ENCODE measurements at regions of chr16 and their contacts with region 1.

Region 1: DNA sequence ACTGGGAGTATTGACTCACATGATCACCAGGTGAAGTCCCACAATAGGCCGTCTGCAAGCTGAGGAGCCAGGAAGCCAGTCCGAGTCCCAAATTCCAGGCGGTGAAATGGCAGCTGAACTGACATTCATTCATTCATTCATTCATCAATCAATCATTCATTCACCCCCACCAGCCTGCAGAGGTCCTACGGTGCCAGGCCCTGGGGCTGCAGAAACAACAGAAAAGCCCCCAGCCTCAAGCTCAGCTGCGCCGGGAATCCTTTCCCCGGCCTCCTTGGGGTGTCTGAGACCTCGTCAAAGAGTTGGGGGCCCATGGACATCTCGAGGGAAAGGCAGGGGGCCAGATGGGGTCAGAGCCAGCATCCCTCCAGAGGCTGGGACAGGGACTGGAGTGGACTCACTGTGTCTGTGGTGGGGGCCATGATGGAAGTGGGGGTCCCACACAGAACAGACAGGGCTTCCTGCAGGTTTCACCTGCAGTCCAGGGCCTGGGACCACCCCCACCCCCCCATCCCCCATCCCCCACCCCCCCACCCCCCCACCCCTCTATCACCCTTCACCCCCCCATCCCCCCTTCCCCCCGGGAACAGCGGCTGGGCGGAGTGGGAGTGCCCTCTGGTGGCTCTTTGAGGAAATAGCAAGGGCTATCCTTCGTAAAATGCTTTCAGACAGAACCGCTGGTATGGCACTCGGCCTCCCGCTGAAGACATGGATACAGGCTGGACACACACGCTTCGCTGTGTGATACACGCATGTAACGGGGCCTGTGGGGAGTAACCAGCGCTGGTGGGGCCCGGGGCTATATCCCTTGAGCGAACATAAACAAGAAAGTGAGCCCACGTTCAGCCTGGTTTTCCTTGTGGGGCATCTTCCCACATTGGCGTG is 8.5 kb upstream of the ZC3H18 start:
- DNase-seq: peak; percentile 33 to 71 (median 47)
- H3K4me3 ChIP-seq: no peak overlapping the region
- H3K4me3 Mint-ChIP-seq: no peak overlapping the region
- H3K27ac ChIP-seq: no peak overlapping the region
- H3K27ac Mint-ChIP-seq: peak overlapping the region in 3 of 8 donors; percentile 25 to 70 (median 35)
- H3K4me1 ChIP-seq: peaks cover 3% of the 10 kb centered on the region
- H3K4me1 Mint-ChIP-seq: peaks cover 3 to 7% (median 3%) of the 10 kb centered on the region in 3 donors
- H3K27me3 ChIP-seq: no peaks in the 10 kb centered on the region
- H3K27me3 Mint-ChIP-seq: peaks cover 0 to 10% of the 10 kb centered on the region in 2 donors

Region 2: DNA sequence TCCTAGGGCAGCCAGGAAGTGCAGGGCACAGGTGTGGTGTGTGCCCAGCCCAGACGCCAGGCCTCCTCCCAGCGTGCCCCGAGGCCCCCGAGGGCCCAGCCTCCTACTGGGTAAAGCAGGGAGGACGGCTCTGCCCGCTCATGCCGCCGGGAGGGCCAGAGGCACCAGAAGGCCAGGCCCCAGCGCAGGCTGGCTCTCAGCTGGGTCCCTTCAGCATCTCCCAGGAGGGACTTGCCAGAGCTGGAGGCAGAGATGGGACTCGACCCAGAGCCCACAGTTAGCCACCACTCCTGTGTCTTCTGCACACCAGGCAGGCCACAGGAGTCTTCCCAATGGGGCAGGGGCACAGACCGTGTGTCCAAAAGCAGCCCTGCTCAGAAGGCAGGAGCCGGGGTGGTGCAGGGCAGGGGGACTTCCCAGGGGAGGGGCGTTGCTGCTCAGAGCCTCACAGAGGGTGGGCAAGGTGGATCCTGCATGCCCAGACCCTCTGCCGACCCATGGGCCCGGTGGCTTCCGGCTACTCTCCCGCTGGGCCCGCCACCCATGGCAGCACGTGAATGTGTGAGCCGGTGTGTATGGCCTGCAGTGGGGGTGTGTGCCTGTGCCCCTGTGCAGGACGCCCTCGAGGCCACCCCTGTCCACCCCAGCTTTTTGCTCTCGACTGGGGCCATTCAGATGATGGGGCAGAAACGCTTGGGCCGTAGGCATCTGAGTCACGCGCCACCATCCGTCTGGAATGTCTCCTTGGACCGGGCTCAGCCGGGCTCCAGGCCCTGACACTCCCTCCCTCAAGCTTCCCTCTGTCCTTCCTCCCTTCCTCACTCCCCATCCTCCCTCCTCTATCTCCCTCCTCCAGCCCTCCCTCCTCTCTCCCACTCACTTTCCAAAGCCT is 184.6 kb before region 1 on chr16:
- CTCF ChIA-PET with region 1: no interaction called
- POLR2A ChIA-PET with region 1: no interaction called
- DNase-seq: no peak
- H3K4me3 ChIP-seq: no peak overlapping the region
- H3K4me3 Mint-ChIP-seq: no peak overlapping the region
- H3K27ac ChIP-seq: no peak overlapping the region
- H3K27ac Mint-ChIP-seq: no peak overlapping the region
- H3K4me1 ChIP-seq: no peaks in the 10 kb centered on the region
- H3K4me1 Mint-ChIP-seq: no peaks in the 10 kb centered on the region
- H3K27me3 ChIP-seq: peaks cover 2% of the 10 kb centered on the region
- H3K27me3 Mint-ChIP-seq: peaks cover 5 to 12% of the 10 kb centered on the region in 2 donors

Region 3: GRCh38 chr16:88442727-88443576 is 118.8 kb before region 1 on chr16:
- CTCF ChIA-PET with region 1: interaction called, 10 read pairs
- POLR2A ChIA-PET with region 1: no interaction called
- DNase-seq: peak; percentile 72 to 84 (median 76)
- H3K4me3 ChIP-seq: no peak overlapping the region
- H3K4me3 Mint-ChIP-seq: no peak overlapping the region
- H3K27ac ChIP-seq: no peak overlapping the region
- H3K27ac Mint-ChIP-seq: no peak overlapping the region
- H3K4me1 ChIP-seq: no peaks in the 10 kb centered on the region
- H3K4me1 Mint-ChIP-seq: peaks cover 0 to 4% (median 4%) of the 10 kb centered on the region in 3 donors
- H3K27me3 ChIP-seq: no peaks in the 10 kb centered on the region
- H3K27me3 Mint-ChIP-seq: peaks cover 0 to 3% of the 10 kb centered on the region in 2 donors